Cardiac septum (tissue), 1 donor: ENCODE measurements at regions of chr2 and their contacts with region 1.

Region 1: DNA sequence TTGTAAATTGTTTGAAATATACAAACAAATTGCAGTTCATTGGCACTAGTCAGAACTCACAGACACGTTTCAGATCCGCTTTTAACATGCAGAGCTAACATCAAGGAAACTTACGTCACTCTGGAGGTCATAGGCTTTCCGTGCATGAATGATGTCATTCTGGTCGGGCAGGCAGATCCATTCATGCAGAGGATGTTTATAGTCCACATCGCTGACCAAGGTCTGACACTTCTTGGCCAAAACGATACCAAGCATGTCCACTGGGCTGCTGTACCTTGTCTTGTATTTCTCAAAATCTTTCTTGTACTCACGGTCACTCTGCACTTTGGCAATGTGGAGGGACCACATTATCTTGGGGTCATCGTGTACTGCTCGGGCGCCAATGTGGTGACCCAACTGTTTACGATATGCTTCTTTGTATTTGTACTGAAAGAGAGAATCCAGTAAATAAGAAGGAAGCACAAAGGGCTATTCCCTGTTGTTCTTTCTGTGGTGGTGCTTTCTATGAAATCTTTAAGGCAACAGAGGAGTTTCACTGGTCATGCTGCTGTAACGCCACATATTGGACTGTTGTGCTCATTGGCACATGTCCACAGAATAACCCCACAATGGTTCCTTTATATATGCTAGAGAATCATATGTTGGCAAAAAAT is 114.8 kb downstream of the NEB start:
- DNase-seq: no peak

Region 2: DNA sequence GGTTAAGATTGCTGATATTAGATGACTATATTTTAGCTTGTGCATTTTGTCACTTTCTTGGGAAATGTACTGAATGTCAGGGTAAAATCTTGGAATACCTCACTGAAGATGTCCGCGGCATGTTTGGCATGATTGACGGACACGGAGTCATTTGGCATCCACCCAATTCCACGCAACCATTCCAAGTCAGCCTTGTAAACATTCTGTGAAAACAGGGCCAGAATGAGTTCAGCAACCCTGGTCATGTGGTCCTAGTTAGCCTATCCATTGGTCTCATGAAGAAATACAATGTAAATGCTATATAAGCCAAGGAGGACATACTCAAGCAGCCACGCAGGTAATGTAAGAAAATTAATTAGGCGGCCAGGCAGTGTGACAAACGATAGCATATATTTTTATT is 50.3 kb before region 1 on chr2:
- intact Hi-C with region 1: no loop called
- DNase-seq: no peak

Region 3: GRCh38 chr2:151819920-151820319 is 200.5 kb after region 1 on chr2:
- intact Hi-C with region 1: loop called (anchors 10 kb)
- DNase-seq: no peak

Region 4: DNA sequence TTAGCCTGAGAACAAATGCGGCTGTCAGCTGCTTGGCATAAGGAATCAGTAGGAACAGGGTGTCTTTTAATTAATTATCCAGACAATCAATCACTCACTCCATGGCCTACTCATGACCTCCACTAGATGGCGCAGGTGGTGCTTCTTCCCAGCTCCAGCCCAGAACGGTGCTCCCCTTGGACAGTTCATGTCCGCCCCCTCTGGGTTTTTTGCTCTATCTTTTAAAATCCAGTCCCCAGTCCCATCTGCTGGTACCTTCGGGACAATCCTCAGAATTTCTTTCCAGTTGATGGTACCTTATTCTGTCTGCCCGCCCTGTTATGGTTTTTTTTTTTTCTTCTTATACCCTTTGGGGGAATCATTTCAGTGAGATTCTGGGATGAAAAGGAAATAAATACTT is 379.6 kb after region 1 on chr2:
- intact Hi-C with region 1: loop called (anchors 5 kb)
- DNase-seq: no peak